ENCODE measurements at regions of chr12 and their contacts with region 1.

Region 1: DNA sequence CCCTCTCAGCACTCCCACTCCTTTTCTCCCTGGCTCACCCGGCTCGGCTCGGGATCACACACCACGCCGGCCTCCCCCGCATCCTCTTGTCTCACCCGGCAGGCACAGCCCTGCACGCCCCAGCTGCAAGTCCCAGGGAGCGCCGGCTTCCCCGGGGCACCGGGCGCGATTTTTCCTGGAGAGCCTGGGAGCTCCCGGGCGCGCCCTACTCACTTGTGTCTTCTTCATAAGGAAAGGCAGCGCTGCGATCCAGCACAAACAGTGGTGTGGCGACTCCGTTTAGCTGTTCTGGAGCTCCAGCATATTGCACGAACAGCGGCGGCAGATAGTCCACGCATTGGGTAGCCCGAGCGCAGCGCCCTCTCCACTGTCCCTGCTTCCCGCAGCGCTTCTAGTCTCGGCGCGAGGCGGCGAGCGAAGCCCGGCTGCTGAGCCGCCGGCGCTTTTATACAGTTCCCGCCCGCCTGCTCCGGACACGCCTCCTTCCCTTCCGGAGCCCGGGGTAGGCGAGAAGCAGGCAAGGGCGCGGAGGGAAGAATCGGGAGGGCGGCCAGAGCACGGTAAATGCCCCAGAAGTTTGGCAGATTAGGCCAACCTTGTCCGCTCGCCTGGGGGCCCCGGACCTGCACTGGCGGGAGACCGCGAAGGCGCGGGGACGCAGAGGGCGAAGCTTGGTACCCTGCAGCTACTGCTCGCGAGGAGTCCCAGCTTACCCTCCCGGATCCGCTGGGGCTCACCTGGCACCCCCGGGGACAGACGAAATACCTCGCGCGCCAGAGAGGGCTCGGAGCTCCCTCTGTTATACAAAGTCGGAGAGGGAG is at the start of gene KITLG:
- DNase-seq: peak; percentile 89
- H3K4me3 Mint-ChIP-seq: peak within 1 kb of the TSS; percentile 91
- H3K27ac Mint-ChIP-seq: peak within 1 kb of the TSS; percentile 30
- H3K4me1 Mint-ChIP-seq: peaks cover 28% of the 10 kb centered on the region
- H3K27me3 Mint-ChIP-seq: no peaks in the 10 kb centered on the region
- CTCF ChIP-seq: no peak
- total RNA-seq, gene KITLG: 29.9 and 34.5 TPM in 2 replicates

Region 2: DNA sequence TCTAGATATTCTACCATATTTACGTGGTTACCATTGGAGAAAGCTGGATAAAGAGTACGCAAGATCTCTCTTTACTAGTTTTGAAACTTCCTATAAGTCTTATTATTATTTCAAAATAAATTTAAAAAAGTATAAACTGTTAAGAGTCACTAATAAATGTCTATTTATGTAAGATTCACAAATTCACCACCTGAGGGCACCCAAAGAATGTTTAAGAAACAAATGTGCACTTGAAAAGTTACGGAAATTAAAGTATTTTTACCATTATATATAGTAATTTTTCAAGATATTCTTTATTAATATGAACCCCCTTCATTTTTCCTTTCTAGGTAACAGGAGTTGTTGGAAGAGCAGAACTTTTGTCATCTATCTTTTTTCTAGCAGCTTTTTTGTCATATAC is 426.3 kb before region 1 on chr12:
- CTCF ChIA-PET with region 1: no interaction called
- intact Hi-C with region 1: loop called (anchors 5 kb)
- DNase-seq: peak; percentile 16
- H3K4me3 Mint-ChIP-seq: no peak overlapping the region
- H3K27ac Mint-ChIP-seq: no peak overlapping the region
- H3K4me1 Mint-ChIP-seq: no peaks in the 10 kb centered on the region
- H3K27me3 Mint-ChIP-seq: no peaks in the 10 kb centered on the region
- CTCF ChIP-seq: peak; percentile 54

Region 3: GRCh38 chr12:88509347-88509746 is 70.9 kb before region 1 on chr12:
- CTCF ChIA-PET with region 1: no interaction called
- intact Hi-C with region 1: no loop called
- DNase-seq: no peak
- H3K4me3 Mint-ChIP-seq: no peak overlapping the region
- H3K27ac Mint-ChIP-seq: no peak overlapping the region
- H3K4me1 Mint-ChIP-seq: no peaks in the 10 kb centered on the region
- H3K27me3 Mint-ChIP-seq: no peaks in the 10 kb centered on the region
- CTCF ChIP-seq: no peak

Region 4: GRCh38 chr12:88549929-88550328 is 30.3 kb before region 1 on chr12:
- CTCF ChIA-PET with region 1: interaction called, 3 read pairs
- intact Hi-C with region 1: loop called (anchors 1 kb)
- DNase-seq: no peak
- H3K4me3 Mint-ChIP-seq: no peak overlapping the region
- H3K27ac Mint-ChIP-seq: no peak overlapping the region
- H3K4me1 Mint-ChIP-seq: peaks cover 32% of the 10 kb centered on the region
- H3K27me3 Mint-ChIP-seq: no peaks in the 10 kb centered on the region
- CTCF ChIP-seq: no peak

Region 5: DNA sequence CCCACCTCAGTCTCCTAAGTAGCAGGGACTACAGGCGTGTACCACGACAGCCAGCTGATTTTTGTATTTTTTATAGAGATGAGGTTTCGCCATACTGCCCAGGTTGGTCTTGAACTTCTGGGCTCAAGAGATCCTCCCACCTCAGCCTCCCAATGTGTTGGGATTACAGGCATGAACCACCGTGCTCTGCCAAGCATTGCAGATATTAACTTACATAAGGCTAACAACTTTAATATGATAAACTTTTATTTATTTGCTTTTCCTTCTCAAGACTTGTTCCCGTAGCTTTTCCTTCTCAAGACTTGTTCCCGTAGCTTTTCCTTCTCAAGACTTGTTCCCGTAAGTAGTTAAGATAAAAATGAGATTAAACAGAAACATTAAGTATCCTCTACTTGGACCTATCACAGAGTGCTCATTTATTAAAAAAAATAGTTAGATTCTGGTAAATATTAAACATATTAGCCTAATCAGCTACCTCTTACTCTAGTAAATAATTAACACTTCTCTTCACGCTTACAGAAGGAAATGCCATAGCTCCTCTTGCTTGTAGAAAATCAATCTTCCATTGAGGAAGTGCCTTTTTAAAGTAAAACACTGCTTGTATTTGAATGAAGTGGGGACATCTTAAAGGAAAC is 157.7 kb after region 1 on chr12:
- CTCF ChIA-PET with region 1: interaction called, 3 read pairs
- intact Hi-C with region 1: loop called (anchors 5 kb)
- DNase-seq: peak; percentile 24
- H3K4me3 Mint-ChIP-seq: peak overlapping the region; percentile 2
- H3K27ac Mint-ChIP-seq: peak overlapping the region; percentile 74
- H3K4me1 Mint-ChIP-seq: peaks cover 39% of the 10 kb centered on the region
- H3K27me3 Mint-ChIP-seq: no peaks in the 10 kb centered on the region
- CTCF ChIP-seq: no peak

Region 6: DNA sequence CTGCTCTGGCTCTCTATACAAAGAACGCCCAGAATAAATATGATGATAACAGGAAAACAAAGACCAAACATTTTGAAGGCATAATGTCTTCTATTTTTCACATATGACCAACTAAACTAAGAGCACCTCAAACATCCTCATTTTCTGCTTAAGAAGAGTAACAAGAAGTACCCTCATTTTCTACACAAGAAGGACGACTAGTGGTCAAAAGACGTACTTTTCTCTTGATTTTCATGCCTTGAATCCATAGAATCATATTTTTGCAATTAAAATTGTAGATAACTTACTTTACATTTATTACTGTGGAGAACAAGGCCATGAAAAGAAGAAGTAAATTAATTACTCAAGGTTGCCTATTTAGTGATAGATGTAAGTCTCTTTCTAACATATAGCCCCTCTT is 413.4 kb after region 1 on chr12:
- CTCF ChIA-PET with region 1: interaction called, 10 read pairs
- intact Hi-C with region 1: loop called (anchors 1 kb)
- DNase-seq: peak; percentile 7
- H3K4me3 Mint-ChIP-seq: no peak overlapping the region
- H3K27ac Mint-ChIP-seq: no peak overlapping the region
- H3K4me1 Mint-ChIP-seq: peaks cover 12% of the 10 kb centered on the region
- H3K27me3 Mint-ChIP-seq: no peaks in the 10 kb centered on the region
- CTCF ChIP-seq: peak; percentile 40